ENCODE measurements at regions of chr7 and their contacts with region 1.

Region 1: DNA sequence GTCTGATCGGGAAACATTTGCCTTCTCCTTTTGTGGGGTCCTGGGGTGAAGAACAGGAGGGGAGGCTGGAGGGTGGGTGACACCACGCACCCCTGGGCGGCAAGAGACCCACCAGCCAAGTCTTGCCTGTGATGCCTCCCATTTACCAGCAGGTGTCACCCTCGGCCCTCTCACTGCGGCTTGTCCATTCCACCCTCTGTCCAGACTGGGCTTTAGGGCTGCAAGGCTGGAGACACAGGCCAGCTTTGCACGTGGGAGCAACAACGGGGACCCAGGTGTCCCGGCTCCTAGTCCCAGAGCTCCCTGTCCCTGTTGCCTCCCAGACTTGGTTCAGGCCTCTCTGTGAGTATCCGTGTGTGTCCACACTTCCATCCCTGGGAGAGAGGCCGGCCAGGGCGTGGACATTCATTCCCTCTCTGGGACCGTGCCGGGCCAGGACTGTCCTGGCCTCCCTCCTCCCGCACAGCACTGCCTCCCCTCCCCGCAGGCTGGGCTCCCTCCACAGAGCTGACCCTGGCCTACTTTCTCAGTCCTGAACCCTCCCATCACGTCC is 36.2 kb upstream of the GTF2IRD1 start:
- DNase-seq: peak in 8 of 9 donors; percentile 12 to 66 (median 45)
- ATAC-seq: peak; percentile 80
- H3K4me3 ChIP-seq: no peak overlapping the region
- H3K4me3 Mint-ChIP-seq: no peak overlapping the region
- H3K27ac ChIP-seq: no peak overlapping the region
- H3K27ac Mint-ChIP-seq: no peak overlapping the region
- H3K4me1 ChIP-seq: no peaks in the 10 kb centered on the region
- H3K4me1 Mint-ChIP-seq: peaks cover 0 to 2% (median 0%) of the 10 kb centered on the region in 7 donors
- H3K27me3 ChIP-seq: no peaks in the 10 kb centered on the region
- H3K27me3 Mint-ChIP-seq: no peaks in the 10 kb centered on the region

Region 2: DNA sequence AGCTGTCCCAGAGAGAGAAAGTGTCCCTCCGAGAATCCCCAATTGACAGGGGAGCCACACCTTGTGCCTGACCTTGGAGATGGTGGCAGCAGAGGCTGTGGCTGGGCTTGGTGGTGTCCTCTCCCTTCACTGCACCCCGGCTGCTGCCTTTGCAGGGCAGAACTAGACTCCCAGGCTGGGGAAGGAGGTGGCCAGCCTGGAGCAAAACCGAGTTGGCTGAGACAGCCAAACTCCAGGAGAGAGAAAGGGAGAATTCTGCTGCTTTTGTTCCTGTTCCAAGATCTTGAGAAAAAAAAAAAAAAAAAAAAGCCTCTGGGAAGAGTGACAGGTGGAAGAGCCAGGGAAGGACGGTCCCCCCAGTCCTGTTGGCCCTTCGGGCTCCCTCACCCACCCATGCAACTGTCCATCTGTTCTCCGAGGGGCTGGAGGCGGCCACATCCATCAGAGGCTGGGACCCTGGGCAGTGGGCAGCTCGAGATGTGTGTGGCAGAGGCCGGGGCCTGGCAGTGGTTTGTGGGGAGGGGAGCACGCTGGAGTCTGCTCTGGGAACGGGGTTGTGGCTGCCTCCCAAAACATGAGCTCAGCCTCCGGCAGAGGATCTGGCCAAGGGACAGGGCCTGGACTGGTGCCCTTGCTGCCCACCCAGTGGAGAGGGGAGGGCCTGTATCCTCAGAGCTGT is 92.8 kb before region 1 on chr7:
- CTCF ChIA-PET with region 1: no interaction called
- POLR2A ChIA-PET with region 1: no interaction called
- intact Hi-C with region 1: no loop called
- DNase-seq: no peak
- ATAC-seq: no peak
- H3K4me3 ChIP-seq: no peak overlapping the region
- H3K4me3 Mint-ChIP-seq: no peak overlapping the region
- H3K27ac ChIP-seq: no peak overlapping the region
- H3K27ac Mint-ChIP-seq: no peak overlapping the region
- H3K4me1 ChIP-seq: no peaks in the 10 kb centered on the region
- H3K4me1 Mint-ChIP-seq: peaks cover 0 to 3% (median 0%) of the 10 kb centered on the region in 7 donors
- H3K27me3 ChIP-seq: no peaks in the 10 kb centered on the region
- H3K27me3 Mint-ChIP-seq: no peaks in the 10 kb centered on the region

Region 3: GRCh38 chr7:74355091-74355490 is 62.4 kb before region 1 on chr7:
- CTCF ChIA-PET with region 1: no interaction called
- POLR2A ChIA-PET with region 1: no interaction called
- intact Hi-C with region 1: loop called in 1 of 2 experiments (anchors 10 kb)
- DNase-seq: no peak
- ATAC-seq: no peak
- H3K4me3 ChIP-seq: no peak overlapping the region
- H3K4me3 Mint-ChIP-seq: no peak overlapping the region
- H3K27ac ChIP-seq: no peak overlapping the region
- H3K27ac Mint-ChIP-seq: no peak overlapping the region
- H3K4me1 ChIP-seq: no peaks in the 10 kb centered on the region
- H3K4me1 Mint-ChIP-seq: no peaks in the 10 kb centered on the region
- H3K27me3 ChIP-seq: no peaks in the 10 kb centered on the region
- H3K27me3 Mint-ChIP-seq: no peaks in the 10 kb centered on the region

Region 4: GRCh38 chr7:74544706-74545469 is 127.4 kb after region 1 on chr7:
- CTCF ChIA-PET with region 1: no interaction called
- POLR2A ChIA-PET with region 1: no interaction called
- intact Hi-C with region 1: loop called (anchors 1 to 5 kb)
- DNase-seq: no peak
- ATAC-seq: no peak
- H3K4me3 ChIP-seq: no peak overlapping the region
- H3K4me3 Mint-ChIP-seq: no peak overlapping the region
- H3K27ac ChIP-seq: no peak overlapping the region
- H3K27ac Mint-ChIP-seq: no peak overlapping the region
- H3K4me1 ChIP-seq: no peaks in the 10 kb centered on the region
- H3K4me1 Mint-ChIP-seq: no peaks in the 10 kb centered on the region
- H3K27me3 ChIP-seq: no peaks in the 10 kb centered on the region
- H3K27me3 Mint-ChIP-seq: no peaks in the 10 kb centered on the region

Region 5: DNA sequence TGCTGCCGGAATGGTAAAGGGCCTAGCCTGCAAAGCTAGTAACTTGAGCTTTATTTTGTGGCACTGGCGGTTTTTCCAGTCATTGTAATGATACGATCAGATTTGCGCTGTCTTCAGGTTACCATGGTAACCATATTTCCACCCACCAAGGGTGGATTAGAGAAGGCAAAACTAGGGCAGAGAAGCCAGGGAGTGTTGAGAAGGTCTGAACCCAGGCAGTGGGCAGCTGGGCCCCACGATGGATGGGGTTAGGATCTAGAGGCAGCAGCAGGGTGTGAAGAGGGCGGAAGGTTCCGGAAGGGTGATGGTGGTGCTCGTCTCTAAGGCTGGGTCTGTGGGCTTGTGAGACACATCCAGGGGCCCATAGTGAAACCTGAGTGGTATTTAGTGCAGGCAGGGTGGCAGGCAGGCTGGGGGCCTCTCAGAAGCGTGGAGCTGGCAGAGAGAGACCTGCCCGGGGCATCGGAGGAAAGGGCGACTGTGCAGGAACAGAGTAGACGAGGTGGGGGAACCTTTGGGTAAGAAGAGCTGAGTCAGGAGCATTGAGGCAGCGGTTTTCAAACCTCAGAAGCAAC is 152.1 kb after region 1 on chr7:
- CTCF ChIA-PET with region 1: interaction called, 20 read pairs
- POLR2A ChIA-PET with region 1: no interaction called
- intact Hi-C with region 1: loop called (anchors 1 to 2 kb)
- DNase-seq: peak in 1 of 9 donors; percentile 2
- ATAC-seq: peak; percentile 28
- H3K4me3 ChIP-seq: no peak overlapping the region
- H3K4me3 Mint-ChIP-seq: peak overlapping the region in 4 of 10 donors; percentile 35 to 55 (median 48)
- H3K27ac ChIP-seq: no peak overlapping the region
- H3K27ac Mint-ChIP-seq: peak overlapping the region in 5 of 9 donors; percentile 42 to 80 (median 62)
- H3K4me1 ChIP-seq: no peaks in the 10 kb centered on the region
- H3K4me1 Mint-ChIP-seq: peaks cover 0 to 18% (median 4%) of the 10 kb centered on the region in 7 donors
- H3K27me3 ChIP-seq: no peaks in the 10 kb centered on the region
- H3K27me3 Mint-ChIP-seq: peaks cover 0 to 3% (median 0%) of the 10 kb centered on the region in 5 donors

Region 6: DNA sequence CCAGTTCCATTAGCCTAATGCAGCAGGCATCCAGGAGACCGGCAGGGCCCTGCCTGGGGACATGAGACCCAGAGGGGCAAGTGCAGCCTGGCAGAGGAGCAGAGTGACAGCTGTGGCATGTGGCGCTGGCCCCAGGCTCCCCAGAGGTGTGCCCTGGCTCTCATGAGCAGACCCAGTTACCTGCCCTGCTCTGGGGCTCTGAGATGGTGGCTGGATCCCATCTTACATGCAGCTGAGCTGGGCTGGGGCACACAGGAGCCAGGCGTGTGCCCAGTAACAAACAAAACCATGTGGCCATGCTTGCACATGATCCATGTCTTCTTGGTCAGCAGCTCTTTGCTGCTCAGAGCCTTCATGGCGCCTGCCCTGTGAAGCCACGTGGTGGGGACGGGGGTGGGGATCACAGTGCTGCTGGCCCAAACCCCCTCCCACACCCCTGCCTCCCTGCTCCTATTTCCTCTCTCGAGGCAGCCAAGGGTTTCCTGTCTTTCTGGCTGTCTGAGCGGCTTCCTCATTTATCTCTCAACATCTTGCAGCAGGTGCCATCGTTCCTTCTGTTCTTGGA is 199.8 kb after region 1 on chr7:
- CTCF ChIA-PET with region 1: no interaction called
- POLR2A ChIA-PET with region 1: no interaction called
- intact Hi-C with region 1: loop called in 1 of 2 experiments (anchors 5 kb)
- DNase-seq: peak in 4 of 9 donors; percentile 5 to 31 (median 28)
- ATAC-seq: peak; percentile 53
- H3K4me3 ChIP-seq: no peak overlapping the region
- H3K4me3 Mint-ChIP-seq: peak overlapping the region; percentile 73 to 90 (median 82)
- H3K27ac ChIP-seq: peak overlapping the region; percentile 46
- H3K27ac Mint-ChIP-seq: peak overlapping the region; percentile 72 to 95 (median 90)
- H3K4me1 ChIP-seq: peaks cover 0 to 22% of the 10 kb centered on the region in 2 donors
- H3K4me1 Mint-ChIP-seq: peaks cover 14 to 31% (median 25%) of the 10 kb centered on the region in 7 donors
- H3K27me3 ChIP-seq: no peaks in the 10 kb centered on the region
- H3K27me3 Mint-ChIP-seq: no peaks in the 10 kb centered on the region

Region 7: GRCh38 chr7:75045881-75046280 is 628.4 kb after region 1 on chr7:
- CTCF ChIA-PET with region 1: no interaction called
- POLR2A ChIA-PET with region 1: no interaction called
- intact Hi-C with region 1: loop called in 1 of 2 experiments (anchors 2 kb)
- DNase-seq: no peak
- ATAC-seq: no peak
- H3K4me3 ChIP-seq: no peak overlapping the region
- H3K4me3 Mint-ChIP-seq: no peak overlapping the region
- H3K27ac ChIP-seq: no peak overlapping the region
- H3K27ac Mint-ChIP-seq: peak overlapping the region in 1 of 9 donors; percentile 31
- H3K4me1 ChIP-seq: no peaks in the 10 kb centered on the region
- H3K4me1 Mint-ChIP-seq: no peaks in the 10 kb centered on the region
- H3K27me3 ChIP-seq: no peaks in the 10 kb centered on the region
- H3K27me3 Mint-ChIP-seq: no peaks in the 10 kb centered on the region

Measured in naive thymus-derived CD4-positive, alpha-beta T cell (primary cell).